BJ (cell line): ENCODE measurements at regions of chr3 and their contacts with region 1.

Region 1: GRCh38 chr3:37967260-37967881 is 23.2 kb upstream of the VILL start:
- DNase-seq: no peak
- H3K4me3 ChIP-seq: no peak overlapping the region
- H3K27me3 ChIP-seq: no peaks in the 10 kb centered on the region
- CTCF ChIP-seq: peak; percentile 94

Region 2: DNA sequence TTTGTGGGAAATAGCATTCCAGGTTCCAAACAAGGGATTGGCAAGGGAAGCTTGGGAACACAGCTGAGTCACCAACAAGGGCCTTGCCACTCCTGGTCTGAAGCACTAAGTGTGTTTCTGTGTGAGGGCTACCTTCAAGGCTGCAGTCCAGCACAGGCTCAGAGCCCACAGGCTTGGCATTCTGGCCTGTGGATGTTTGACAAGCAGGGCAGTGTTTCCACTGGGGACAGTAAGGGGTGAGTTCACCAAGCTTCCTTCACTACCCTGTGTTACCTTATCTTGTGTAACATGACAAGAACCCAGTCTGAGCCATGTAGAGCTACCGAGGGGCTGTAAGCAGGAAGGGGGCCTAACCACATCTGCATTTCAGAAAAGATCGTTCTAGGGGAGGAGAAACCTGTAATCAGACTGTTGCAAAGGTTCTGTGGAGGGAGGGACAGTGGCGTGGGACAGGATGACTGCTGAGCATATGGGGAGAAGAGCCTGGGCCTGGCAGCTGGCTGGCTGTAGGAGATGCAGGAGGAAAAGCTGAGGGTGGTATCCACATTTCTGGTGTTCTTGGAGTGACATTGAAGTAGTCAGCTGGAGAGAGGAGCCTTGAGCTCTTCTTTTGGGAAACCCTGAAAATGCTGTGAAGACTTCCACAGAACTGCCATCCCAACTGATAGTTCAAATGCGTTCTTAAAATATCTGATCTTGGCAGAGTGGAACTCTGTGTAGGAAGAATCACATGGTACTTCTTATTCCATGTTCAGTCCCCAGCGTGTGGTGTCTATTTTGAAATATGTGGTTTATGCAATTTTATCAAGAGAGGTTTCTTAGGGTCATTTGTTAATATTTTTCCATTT is 44.4 kb before region 1 on chr3:
- CTCF ChIA-PET with region 1: interaction called, 13 read pairs
- POLR2A ChIA-PET with region 1: no interaction called
- DNase-seq: no peak
- H3K4me3 ChIP-seq: no peak overlapping the region
- H3K27me3 ChIP-seq: no peaks in the 10 kb centered on the region
- CTCF ChIP-seq: no peak

Region 3: DNA sequence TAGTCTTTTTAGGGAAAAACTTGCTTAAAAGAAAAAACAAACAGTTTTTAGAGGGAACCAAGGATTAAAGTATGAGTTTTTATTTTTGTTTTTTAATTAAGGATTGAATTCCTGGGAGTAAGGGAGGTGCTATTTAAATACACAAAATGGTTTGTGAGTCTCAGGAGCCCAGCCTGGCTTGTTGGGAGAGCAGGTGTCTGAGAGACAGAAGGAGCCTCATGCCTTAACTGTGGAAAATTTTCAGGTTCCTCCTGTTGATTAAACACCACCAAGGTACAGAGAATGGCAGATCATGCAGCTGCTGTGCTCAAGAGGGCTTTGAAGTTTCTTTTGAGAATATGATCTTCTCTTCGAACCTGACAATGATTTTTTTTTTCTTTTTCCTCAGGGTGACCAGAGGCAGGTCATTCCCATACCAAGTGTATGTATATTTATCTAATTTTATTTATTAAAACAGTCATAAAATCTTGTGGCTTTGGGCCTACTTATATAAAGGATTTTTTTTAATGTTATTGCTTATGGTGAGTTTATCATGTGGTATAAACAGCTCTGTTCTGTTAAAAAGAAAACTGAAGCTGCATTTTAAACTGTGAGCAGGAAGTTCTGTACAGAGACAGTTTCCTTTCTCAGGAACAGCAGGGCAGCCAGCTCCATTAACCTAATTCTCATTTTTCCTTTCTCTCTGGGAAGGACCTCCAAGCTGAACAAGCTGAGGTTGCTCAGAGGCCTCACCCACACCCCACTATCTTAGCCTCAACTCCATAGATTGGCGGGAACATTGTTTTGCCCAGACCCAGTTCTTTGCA is 10.4 kb before region 1 on chr3:
- CTCF ChIA-PET with region 1: interaction called, 18 read pairs
- POLR2A ChIA-PET with region 1: no interaction called
- DNase-seq: no peak
- H3K4me3 ChIP-seq: no peak overlapping the region
- H3K27me3 ChIP-seq: no peaks in the 10 kb centered on the region
- CTCF ChIP-seq: no peak

Region 4: DNA sequence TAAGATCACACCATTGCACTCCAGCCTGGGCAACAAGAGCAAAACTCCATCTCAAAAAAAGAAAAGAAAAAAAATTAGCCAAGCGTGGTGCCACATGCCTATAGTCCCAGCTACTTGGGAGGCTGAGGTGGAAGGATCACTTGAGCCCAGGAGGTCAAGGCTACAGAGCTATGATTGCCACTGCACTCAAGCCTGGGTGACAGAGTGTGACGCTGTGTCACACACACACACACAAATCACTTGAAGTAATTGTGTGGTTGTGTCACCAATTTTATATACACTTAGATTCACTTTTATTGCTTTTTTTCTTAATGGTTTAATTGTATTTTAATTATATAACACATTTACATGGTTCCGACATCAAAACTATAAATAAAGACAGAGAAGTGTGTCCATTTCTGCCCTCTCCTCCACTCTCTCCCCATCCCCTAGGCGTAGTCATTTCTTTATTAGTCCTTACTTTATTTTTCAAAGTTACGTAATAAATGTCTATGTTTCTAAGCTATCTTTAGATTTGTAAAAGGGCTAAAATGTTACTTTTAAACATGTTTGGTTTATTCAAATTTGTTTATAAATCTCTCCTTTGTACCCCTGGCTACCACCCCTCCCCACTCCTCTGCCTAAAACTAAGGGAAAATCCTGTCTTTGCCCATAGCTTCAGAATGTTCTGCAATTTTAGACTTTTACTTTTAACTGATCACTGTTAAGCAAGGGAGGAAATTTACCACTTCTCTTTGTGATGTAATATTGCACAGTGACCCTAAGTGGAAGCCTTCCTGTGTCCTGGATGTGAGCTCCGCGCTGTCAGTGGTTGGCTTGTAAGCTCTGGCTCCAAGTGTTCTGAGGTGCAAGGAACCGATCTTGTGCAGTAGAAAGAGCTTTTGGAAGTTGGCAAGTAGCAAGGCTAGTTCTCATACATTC is 12.4 kb after region 1 on chr3:
- CTCF ChIA-PET with region 1: interaction called, 16 read pairs
- POLR2A ChIA-PET with region 1: no interaction called
- DNase-seq: no peak
- H3K4me3 ChIP-seq: no peak overlapping the region
- H3K27me3 ChIP-seq: no peaks in the 10 kb centered on the region
- CTCF ChIP-seq: no peak

Region 5: GRCh38 chr3:37986479-37987314 is 19.3 kb after region 1 on chr3:
- CTCF ChIA-PET with region 1: interaction called, 16 read pairs
- POLR2A ChIA-PET with region 1: no interaction called
- DNase-seq: no peak
- H3K4me3 ChIP-seq: no peak overlapping the region
- H3K27me3 ChIP-seq: no peaks in the 10 kb centered on the region
- CTCF ChIP-seq: no peak

Region 6: GRCh38 chr3:38164966-38165680 is 197.8 kb after region 1 on chr3 and contains the start of gene OXSR1:
- CTCF ChIA-PET with region 1: no interaction called
- POLR2A ChIA-PET with region 1: no interaction called
- DNase-seq: peak; percentile 99
- H3K4me3 ChIP-seq: peak within 1 kb of the TSS; percentile 74
- H3K27me3 ChIP-seq: no peaks in the 10 kb centered on the region
- CTCF ChIP-seq: no peak
- polyA plus RNA-seq, gene OXSR1: 27.6 and 43.6 TPM in 2 replicates